ENCODE measurements at regions of chr11 and their contacts with region 1.

Region 1: DNA sequence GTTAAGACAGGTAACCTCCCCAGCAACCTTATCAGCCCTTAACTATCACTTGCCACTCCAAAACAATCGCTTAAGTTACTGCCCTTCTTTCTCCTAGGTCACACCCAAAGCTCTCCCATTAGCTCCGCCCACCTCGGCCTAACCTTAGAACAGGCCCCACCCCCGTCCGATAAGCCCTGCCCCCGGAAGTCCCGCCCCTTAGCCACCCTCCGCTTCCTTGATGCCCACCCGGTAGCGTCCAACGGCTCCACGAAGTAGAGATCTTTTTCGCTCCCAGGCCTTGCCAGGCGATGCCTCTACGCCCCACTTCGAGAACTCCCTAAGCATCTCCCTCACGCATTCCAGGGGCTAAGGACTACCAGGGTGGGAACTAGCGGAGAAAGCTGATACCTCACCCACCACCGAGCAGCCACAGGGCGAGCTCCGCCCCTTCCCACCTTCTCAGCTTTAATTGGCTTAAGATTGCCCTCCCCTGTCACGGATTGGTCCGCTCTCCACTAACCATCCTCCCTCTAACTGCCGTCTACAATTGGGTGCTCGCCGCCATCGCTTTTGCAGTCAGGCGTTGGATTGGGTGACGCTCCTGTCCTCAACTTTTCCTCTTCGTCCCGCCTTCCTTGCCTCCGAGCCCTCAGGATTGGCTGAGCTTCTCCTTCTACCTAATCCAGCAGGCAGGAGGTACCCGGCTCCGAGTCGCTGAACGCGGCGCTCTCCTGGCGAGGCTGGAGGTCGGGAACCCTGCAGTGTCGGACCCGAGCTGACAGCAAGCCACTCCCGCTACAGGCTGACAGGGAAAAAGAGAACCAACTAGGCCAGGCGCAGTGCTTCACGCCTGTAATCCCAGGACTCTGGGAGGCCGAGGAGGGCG is at the start of gene ZBTB3:
- DNase-seq: peak; percentile 99
- ATAC-seq: peak; percentile 99
- H3K4me3 ChIP-seq: peak within 1 kb of the TSS; percentile 85
- H3K27ac ChIP-seq: peak within 1 kb of the TSS; percentile 92
- H3K4me1 ChIP-seq: peaks cover 6% of the 10 kb centered on the region
- H3K27me3 ChIP-seq: no peaks in the 10 kb centered on the region
- CTCF ChIP-seq: no peak
- EP300 ChIP-seq: no peak
- POLR2A ChIP-seq: peak; percentile 85
- RAD21 ChIP-seq: no peak
- polyA plus RNA-seq, gene ZBTB3: 1.4 to 1.9 TPM

Region 2: GRCh38 chr11:62771144-62772021 is 17.4 kb after region 1 on chr11 and contains the start of gene TAF6L:
- CTCF ChIA-PET with region 1: interaction called, 42 read pairs
- POLR2A ChIA-PET with region 1: interaction called, 28 read pairs
- RAD21 ChIA-PET with region 1: interaction called, 9 read pairs
- SMC1A ChIA-PET with region 1: interaction called, 7 read pairs
- in situ Hi-C with region 1: no loop called
- intact Hi-C with region 1: no loop called
- DNase-seq: peak; percentile 77
- ATAC-seq: peak; percentile 92
- H3K4me3 ChIP-seq: peak within 1 kb of the TSS; percentile 86
- H3K27ac ChIP-seq: peak within 1 kb of the TSS; percentile 82
- H3K4me1 ChIP-seq: peaks cover 17% of the 10 kb centered on the region
- H3K27me3 ChIP-seq: no peaks in the 10 kb centered on the region
- CTCF ChIP-seq: no peak
- EP300 ChIP-seq: 0 out of 4 replicates have a peak, but pooled peaks of 1 of the 2 experiments have one; percentile 6
- POLR2A ChIP-seq: peak; percentile 83
- RAD21 ChIP-seq: no peak
- polyA plus RNA-seq, gene TAF6L: 0.15 to 0.39 TPM

Region 3: DNA sequence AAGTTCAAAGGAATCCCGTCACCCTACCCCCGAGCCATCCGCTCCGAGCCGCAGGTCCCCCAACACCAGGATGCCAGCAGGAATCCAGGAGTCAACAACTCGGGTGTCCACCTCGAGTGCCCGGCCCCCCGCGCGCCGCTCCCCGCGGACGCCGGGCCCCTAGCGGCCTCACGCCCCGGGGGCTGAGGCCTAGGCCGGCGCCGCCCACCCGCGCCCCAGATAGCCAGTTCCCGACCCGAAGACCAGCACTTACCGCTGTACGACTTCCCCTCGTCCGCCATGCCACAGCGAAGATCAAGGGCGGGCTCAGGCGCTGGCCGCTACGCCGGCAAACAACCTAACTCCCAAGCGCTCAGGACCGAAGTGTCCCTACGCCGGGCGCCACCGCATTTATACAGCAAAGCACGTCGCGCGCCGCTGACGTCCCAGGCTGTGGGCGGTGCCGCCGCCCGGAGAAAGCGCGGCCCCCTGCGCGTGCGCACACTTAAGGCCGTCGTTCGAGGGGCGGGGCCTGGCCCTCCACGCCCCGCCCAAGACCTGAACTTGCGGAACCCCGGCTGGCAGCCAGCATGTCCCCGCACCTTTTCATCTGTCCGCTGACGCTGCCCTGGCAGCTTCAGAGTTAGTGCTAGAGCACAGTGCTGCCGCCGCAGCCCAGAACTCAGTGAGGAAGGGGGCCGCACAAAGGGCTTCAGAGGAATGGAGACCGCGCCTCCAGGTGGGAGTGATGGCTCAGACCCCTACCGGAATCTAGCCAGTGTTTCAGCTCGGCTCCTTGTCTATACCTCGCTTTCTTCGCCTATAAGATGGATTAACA is 51.3 kb after region 1 on chr11 and contains the start of gene NXF1:
- CTCF ChIA-PET with region 1: no interaction called
- POLR2A ChIA-PET with region 1: interaction called, 12 read pairs
- RAD21 ChIA-PET with region 1: no interaction called
- SMC1A ChIA-PET with region 1: no interaction called
- in situ Hi-C with region 1: no loop called
- intact Hi-C with region 1: no loop called
- DNase-seq: peak; percentile 80
- ATAC-seq: peak; percentile 89
- H3K4me3 ChIP-seq: peak within 1 kb of the TSS; percentile 85
- H3K27ac ChIP-seq: peak within 1 kb of the TSS; percentile 86
- H3K4me1 ChIP-seq: peaks cover 16% of the 10 kb centered on the region
- H3K27me3 ChIP-seq: no peaks in the 10 kb centered on the region
- CTCF ChIP-seq: peak in 1 of 3 experiments; percentile 26; a peak in 1 of 6 replicates
- EP300 ChIP-seq: 0 out of 4 replicates have a peak, but pooled peaks of 1 of the 2 experiments have one; percentile 22
- POLR2A ChIP-seq: peak; percentile 100
- RAD21 ChIP-seq: no peak
- polyA plus RNA-seq, gene NXF1: 23.4 to 37.5 TPM

Region 4: DNA sequence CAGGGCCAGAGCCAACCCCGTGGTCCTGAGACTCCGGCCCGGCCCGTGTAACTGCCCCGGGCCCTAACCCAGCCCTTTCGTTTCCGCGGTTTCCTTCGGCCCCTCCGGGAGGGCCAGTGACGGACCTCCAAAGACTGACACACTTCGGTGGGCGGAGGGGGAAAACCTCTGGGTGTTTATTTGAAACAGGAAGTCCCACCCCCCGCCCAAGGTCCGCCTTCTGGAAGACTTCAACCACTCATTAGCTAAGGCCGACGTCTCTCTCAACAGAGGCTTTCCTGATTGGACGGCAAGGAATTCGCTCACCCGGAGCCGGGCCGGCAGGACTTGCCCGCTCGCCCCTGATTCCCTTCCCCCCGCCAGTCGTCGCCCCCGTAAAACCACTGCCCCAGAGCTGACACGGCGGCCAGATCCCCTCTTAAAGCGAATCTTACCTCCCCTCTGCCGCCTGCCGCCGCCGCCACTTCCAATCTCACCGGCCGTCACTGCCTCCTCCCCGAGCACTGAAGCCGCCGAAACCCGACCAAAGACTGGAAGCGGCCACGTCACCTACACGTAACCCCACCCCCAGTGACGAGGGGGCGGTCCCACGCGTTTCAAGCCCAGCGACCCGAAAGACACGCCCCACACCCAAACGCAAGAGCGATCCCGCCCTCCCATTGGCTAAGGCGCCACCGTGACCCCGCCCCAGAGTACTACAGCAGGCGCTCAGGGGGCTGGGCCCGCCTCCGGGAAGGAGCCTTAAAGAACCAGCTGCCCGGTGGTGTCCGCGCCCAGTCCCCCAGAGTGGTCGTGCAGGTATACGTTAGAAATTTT is 77.8 kb after region 1 on chr11 and contains the start of gene STX5:
- CTCF ChIA-PET with region 1: no interaction called
- POLR2A ChIA-PET with region 1: interaction called, 10 read pairs
- RAD21 ChIA-PET with region 1: interaction called, 6 read pairs
- SMC1A ChIA-PET with region 1: interaction called, 4 read pairs
- in situ Hi-C with region 1: no loop called
- intact Hi-C with region 1: no loop called
- DNase-seq: peak; percentile 93
- ATAC-seq: peak; percentile 93
- H3K4me3 ChIP-seq: peak within 1 kb of the TSS; percentile 99
- H3K27ac ChIP-seq: peak within 1 kb of the TSS; percentile 84
- H3K4me1 ChIP-seq: peaks cover 8% of the 10 kb centered on the region
- H3K27me3 ChIP-seq: no peaks in the 10 kb centered on the region
- CTCF ChIP-seq: no peak
- EP300 ChIP-seq: 0 out of 4 replicates have a peak, but pooled peaks of 1 of the 2 experiments have one; percentile 16
- POLR2A ChIP-seq: peak; percentile 88
- RAD21 ChIP-seq: no peak
- polyA plus RNA-seq, gene STX5: 3.8 to 4.5 TPM

Region 5: GRCh38 chr11:62880803-62881578 is 127.0 kb after region 1 on chr11 and contains the start of gene SLC3A2:
- CTCF ChIA-PET with region 1: no interaction called
- POLR2A ChIA-PET with region 1: interaction called, 12 read pairs
- RAD21 ChIA-PET with region 1: interaction called, 6 read pairs
- SMC1A ChIA-PET with region 1: no interaction called
- in situ Hi-C with region 1: no loop called
- intact Hi-C with region 1: no loop called
- DNase-seq: peak; percentile 47
- ATAC-seq: peak; percentile 92
- H3K4me3 ChIP-seq: peak within 1 kb of the TSS; percentile 91
- H3K27ac ChIP-seq: peak within 1 kb of the TSS; percentile 95
- H3K4me1 ChIP-seq: peaks cover 15% of the 10 kb centered on the region
- H3K27me3 ChIP-seq: no peaks in the 10 kb centered on the region
- CTCF ChIP-seq: peak; percentile 64 to 86 (median 83)
- EP300 ChIP-seq: peak in 1 of 2 experiments; percentile 17; a peak in 1 of 4 replicates
- POLR2A ChIP-seq: peak; percentile 94
- RAD21 ChIP-seq: peak; percentile 58
- polyA plus RNA-seq, gene SLC3A2: 6.9 to 17.0 TPM